ENCODE measurements at regions of chr17 and their contacts with region 1.

Region 1: DNA sequence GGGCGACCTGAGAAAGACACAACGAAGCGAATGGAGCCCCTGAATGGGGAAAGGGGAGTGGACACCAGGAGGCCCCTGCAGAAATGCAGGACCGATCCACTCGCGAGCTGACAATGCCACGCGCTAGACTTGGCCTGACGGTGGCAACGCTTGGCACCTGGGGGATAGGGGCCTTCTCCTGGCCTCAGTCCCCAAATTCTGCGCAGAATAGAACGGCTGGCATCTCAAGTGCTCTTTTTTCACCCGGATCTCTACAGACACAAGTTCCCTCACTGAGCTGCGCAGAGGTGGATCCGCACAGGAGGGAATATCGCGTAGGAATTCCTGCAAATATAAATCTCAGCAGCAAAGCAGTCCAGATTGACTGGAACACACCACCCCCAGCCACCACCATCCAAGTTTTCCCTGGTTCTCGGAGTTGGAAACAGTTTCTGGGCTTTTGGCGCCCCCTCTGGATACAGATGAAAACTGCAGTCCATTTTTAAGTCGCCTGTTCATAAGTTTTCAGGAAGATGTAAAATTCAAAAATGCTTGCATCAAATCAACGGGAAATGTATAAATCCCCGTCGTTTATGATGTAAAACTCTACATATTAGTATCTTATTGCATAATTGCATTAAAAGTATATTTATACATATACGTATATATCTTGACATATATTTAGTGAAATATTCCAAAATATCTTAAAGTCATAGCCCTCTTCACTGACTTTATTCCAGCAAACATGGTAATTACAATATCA is 2.3 kb upstream of the SOX9 start:
- DNase-seq: peak; percentile 84
- H3K4me3 Mint-ChIP-seq: peak overlapping the region; percentile 90
- H3K27ac Mint-ChIP-seq: peak overlapping the region; percentile 97
- H3K4me1 Mint-ChIP-seq: peaks cover 15% of the 10 kb centered on the region
- H3K27me3 Mint-ChIP-seq: peaks cover 46% of the 10 kb centered on the region
- CTCF ChIP-seq: peak; percentile 92

Region 2: DNA sequence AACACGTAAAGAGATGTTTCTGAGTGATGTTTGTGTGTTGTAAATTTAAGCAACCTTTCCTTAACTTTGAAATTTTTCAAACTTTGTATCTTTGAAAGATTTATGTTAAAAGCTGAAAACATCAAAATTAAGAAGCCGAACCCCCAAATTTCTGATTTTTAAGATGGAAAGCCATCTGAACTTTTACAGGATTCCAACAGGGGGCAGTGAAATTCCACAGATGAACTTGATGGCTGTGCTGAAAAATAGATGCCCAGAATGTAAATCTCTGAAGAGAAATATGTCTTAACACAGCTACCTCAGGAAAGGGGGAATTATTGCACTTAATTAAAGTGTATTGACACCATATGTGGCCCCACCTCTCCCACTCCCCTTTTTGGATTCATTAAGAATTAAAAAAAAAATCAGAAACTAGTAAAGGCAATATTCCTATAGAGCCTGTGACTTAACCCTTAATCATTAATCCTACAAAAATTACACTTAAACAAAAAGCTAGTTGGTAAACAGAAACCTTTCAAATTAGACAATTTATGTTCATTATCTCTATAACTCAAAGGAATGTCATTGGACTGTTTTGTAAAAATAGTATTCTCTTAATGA is 1351.3 kb before region 1 on chr17:
- CTCF ChIA-PET with region 1: interaction called, 4 read pairs
- intact Hi-C with region 1: loop called (anchors 2 kb)
- DNase-seq: peak; percentile 28
- H3K4me3 Mint-ChIP-seq: no peak overlapping the region
- H3K27ac Mint-ChIP-seq: no peak overlapping the region
- H3K4me1 Mint-ChIP-seq: no peaks in the 10 kb centered on the region
- H3K27me3 Mint-ChIP-seq: no peaks in the 10 kb centered on the region
- CTCF ChIP-seq: peak; percentile 57

Region 3: GRCh38 chr17:71237903-71238538 is 880.5 kb before region 1 on chr17:
- CTCF ChIA-PET with region 1: no interaction called
- intact Hi-C with region 1: loop called (anchors 2 kb)
- DNase-seq: no peak
- H3K4me3 Mint-ChIP-seq: no peak overlapping the region
- H3K27ac Mint-ChIP-seq: no peak overlapping the region
- H3K4me1 Mint-ChIP-seq: peaks cover 10% of the 10 kb centered on the region
- H3K27me3 Mint-ChIP-seq: no peaks in the 10 kb centered on the region
- CTCF ChIP-seq: no peak

Region 4: GRCh38 chr17:71633391-71633849 is 485.1 kb before region 1 on chr17:
- CTCF ChIA-PET with region 1: interaction called, 6 read pairs
- intact Hi-C with region 1: loop called (anchors 5 kb)
- DNase-seq: peak; percentile 21
- H3K4me3 Mint-ChIP-seq: peak overlapping the region; percentile 2
- H3K27ac Mint-ChIP-seq: no peak overlapping the region
- H3K4me1 Mint-ChIP-seq: peaks cover 29% of the 10 kb centered on the region
- H3K27me3 Mint-ChIP-seq: no peaks in the 10 kb centered on the region
- CTCF ChIP-seq: no peak

Region 5: GRCh38 chr17:71792966-71793365 is 325.5 kb before region 1 on chr17:
- CTCF ChIA-PET with region 1: interaction called, 3 read pairs
- intact Hi-C with region 1: loop called (anchors 2 kb)
- DNase-seq: peak; percentile 54
- H3K4me3 Mint-ChIP-seq: no peak overlapping the region
- H3K27ac Mint-ChIP-seq: peak overlapping the region; percentile 25
- H3K4me1 Mint-ChIP-seq: peaks cover 27% of the 10 kb centered on the region
- H3K27me3 Mint-ChIP-seq: peaks cover 10% of the 10 kb centered on the region
- CTCF ChIP-seq: no peak

Region 6: GRCh38 chr17:72136693-72137092 is 18.2 kb after region 1 on chr17:
- CTCF ChIA-PET with region 1: no interaction called
- intact Hi-C with region 1: no loop called
- DNase-seq: no peak
- H3K4me3 Mint-ChIP-seq: no peak overlapping the region
- H3K27ac Mint-ChIP-seq: peak overlapping the region; percentile 74
- H3K4me1 Mint-ChIP-seq: peaks cover 39% of the 10 kb centered on the region
- H3K27me3 Mint-ChIP-seq: no peaks in the 10 kb centered on the region
- CTCF ChIP-seq: no peak

Measured in Calu3 (cell line).